Transverse colon (tissue), 4 donors: ENCODE measurements at regions of chr2 and their contacts with region 1.

Region 1: DNA sequence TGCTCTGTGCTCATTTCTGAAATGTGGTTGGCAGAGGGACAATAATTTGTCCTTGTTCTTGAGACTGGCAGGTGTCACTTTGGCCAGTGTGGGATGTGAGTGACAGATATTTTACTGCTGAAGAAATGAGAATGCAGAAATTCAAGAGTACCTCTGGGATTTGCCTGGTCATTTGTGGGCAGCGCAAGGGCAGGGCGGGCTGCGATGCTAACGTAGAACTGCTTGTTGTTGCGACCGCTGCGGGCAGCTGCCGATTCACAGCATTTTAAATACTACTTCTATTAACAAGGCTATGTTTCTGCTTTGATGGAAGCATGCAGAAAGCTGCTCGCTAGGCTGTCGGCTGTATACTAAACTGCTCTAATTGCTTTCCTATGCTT is 268.6 kb downstream of the FIGN start:
- DNase-seq: no peak
- H3K4me3 ChIP-seq: no peak overlapping the region
- H3K27ac ChIP-seq: no peak overlapping the region
- H3K4me1 ChIP-seq: no peaks in the 10 kb centered on the region
- H3K27me3 ChIP-seq: no peaks in the 10 kb centered on the region
- CTCF ChIP-seq: no peak
- EP300 ChIP-seq: no peak
- POLR2A ChIP-seq: no peak

Region 2: DNA sequence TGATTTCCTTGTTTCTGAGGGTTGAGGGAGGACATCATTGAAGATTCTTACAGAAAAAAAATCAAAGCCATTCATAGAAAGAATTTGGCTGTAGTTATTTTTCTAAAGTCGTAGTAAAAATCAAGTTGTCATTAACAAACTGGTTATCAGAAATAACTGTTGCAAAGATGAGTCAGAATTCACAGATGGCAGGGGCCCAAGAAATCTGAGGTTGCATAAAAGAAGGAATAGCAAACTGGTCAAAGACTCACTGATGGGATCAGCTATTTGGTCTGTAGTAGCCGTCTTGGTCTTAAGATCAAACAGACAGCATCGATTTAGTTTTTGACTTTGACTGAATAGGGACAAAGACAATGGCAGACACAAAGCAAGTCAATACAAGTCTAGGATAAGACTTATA is 65.8 kb before region 1 on chr2:
- in situ Hi-C with region 1: no loop called
- intact Hi-C with region 1: no loop called
- DNase-seq: no peak
- H3K4me3 ChIP-seq: no peak overlapping the region
- H3K27ac ChIP-seq: no peak overlapping the region
- H3K4me1 ChIP-seq: no peaks in the 10 kb centered on the region
- H3K27me3 ChIP-seq: no peaks in the 10 kb centered on the region
- CTCF ChIP-seq: no peak
- EP300 ChIP-seq: no peak
- POLR2A ChIP-seq: no peak

Region 3: GRCh38 chr2:163417596-163418337 is 49.5 kb before region 1 on chr2:
- in situ Hi-C with region 1: no loop called
- intact Hi-C with region 1: loop called (anchors 2 kb)
- DNase-seq: no peak
- H3K4me3 ChIP-seq: no peak overlapping the region
- H3K27ac ChIP-seq: no peak overlapping the region
- H3K4me1 ChIP-seq: no peaks in the 10 kb centered on the region
- H3K27me3 ChIP-seq: no peaks in the 10 kb centered on the region
- CTCF ChIP-seq: no peak
- EP300 ChIP-seq: no peak
- POLR2A ChIP-seq: no peak

Region 4: DNA sequence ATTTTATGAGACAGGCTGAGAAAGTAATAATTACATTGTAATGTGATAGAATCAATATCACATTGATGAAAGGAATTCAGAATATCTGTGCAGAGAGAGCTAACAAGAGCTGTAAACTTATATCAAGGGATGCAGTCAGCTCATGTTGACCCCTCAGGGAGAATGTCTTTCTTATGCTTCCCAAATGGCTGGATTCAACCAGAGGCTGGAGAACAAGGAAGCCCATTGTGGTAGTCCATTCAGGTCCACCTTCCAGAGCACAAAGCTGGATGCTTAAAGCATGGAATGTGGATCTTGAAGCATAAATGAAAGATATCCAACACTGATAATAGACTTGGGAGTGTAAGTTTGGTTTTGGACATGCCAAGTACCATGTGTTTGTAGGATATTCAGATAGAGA is 48.6 kb after region 1 on chr2:
- in situ Hi-C with region 1: no loop called
- intact Hi-C with region 1: no loop called
- DNase-seq: no peak
- H3K4me3 ChIP-seq: no peak overlapping the region
- H3K27ac ChIP-seq: no peak overlapping the region
- H3K4me1 ChIP-seq: no peaks in the 10 kb centered on the region
- H3K27me3 ChIP-seq: no peaks in the 10 kb centered on the region
- CTCF ChIP-seq: no peak
- EP300 ChIP-seq: no peak
- POLR2A ChIP-seq: no peak

Region 5: DNA sequence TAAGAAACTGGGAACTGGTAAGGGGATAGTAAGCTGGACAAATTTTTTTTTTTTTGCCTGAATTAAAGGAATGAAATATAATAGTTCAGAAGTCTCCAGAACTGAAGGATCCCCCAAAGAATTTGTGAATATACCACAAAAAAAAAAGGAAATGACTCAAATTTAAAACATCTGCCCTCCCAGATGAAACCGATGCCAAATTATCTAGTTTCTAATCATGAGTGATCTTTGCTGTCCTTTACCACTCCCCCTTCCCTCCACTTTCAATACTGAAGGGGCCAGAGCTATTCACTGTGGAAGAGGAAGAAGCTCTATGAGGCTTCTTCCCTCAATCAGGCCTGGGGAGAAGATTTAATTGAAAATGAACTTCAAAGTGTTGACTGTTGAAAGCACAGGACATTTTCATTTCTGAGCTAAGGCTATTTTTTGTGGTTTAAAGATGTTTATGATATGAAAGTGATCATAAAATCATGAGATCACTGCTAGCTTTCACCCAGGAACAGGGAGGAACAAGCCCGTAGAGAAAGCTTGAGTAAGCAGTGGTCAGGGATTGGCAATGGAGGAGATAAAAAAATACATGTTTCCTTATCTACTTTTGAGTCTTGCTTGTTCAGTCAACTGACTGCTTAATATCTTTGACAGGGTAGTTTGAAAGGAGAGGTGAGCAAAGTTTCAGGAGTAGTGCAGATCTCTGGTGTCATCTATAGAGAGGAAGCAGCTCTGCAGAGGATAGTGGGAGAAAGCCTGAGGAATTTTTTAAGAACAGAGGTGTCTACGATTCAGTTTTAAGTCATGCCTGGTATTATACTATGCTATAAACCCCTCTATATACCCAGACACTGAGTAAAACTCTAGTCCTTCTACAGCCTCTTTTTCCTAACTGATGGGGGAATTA is 678.1 kb after region 1 on chr2:
- in situ Hi-C with region 1: no loop called
- intact Hi-C with region 1: no loop called
- DNase-seq: no peak
- H3K4me3 ChIP-seq: no peak overlapping the region
- H3K27ac ChIP-seq: no peak overlapping the region
- H3K4me1 ChIP-seq: no peaks in the 10 kb centered on the region
- H3K27me3 ChIP-seq: no peaks in the 10 kb centered on the region
- CTCF ChIP-seq: no peak
- EP300 ChIP-seq: no peak
- POLR2A ChIP-seq: no peak